PC-3 (cell line): ENCODE measurements at regions of chr1 and their contacts with region 1.

Region 1: DNA sequence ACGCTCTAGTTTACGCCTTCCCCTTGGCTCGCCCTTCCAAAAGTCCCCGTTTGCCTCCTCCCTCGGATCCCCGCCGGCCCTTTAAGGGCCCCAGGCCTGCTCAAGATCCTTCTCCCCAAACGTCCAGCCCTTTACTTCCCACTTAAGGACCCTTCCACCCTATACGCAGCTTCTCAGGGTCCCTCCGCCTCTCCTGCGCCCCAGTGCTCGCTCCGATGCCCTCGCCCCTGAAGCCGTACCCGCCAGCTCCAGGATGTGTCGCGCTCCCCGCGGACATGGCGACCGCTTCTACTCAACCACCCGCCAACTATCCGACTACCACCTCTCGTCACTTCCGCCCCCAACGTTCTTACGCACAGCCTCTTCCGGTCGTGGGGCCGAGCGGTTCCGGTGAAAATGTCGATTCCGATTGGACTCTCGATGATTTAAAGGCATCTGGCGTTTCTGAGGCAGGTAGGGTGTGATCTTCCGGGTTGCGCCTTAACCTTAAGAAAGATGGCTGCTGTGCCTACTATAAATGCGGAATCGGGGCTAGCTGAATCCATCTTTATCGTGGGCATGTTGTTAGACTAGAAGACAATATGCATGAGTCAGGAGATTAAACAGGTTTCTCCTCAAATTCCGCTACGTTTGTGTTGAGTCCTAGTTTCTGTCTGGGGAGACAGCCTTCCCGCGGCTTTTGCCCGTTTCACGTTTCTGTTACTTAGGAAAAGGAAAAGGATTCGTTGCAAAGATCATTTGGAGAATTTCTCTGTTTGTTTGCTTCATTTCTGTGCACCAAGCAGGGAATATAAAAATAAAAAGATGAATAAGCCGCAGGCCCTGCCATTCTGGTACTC is at the start of gene KHDC4:
- DNase-seq: peak; percentile 100
- ATAC-seq: peak; percentile 76
- H3K4me3 ChIP-seq: peak within 1 kb of the TSS; percentile 80
- H3K27ac ChIP-seq: peak within 1 kb of the TSS; percentile 79
- H3K4me1 ChIP-seq: peaks cover 40% of the 10 kb centered on the region
- H3K27me3 ChIP-seq: no peaks in the 10 kb centered on the region
- CTCF ChIP-seq: no peak
- total RNA-seq, gene KHDC4: 63.4 and 64.4 TPM in 2 replicates

Region 2: GRCh38 chr1:155776404-155776803 is 157.9 kb before region 1 on chr1:
- CTCF ChIA-PET with region 1: no interaction called
- POLR2A ChIA-PET with region 1: no interaction called
- intact Hi-C with region 1: no loop called
- DNase-seq: peak; percentile 58
- ATAC-seq: 0 out of 2 replicates have a peak, but pooled peaks have one; percentile 16
- H3K4me3 ChIP-seq: no peak overlapping the region
- H3K27ac ChIP-seq: peak overlapping the region; percentile 25
- H3K4me1 ChIP-seq: peaks cover 23% of the 10 kb centered on the region
- H3K27me3 ChIP-seq: no peaks in the 10 kb centered on the region
- CTCF ChIP-seq: no peak

Region 3: GRCh38 chr1:155859234-155859829 is 75.0 kb before region 1 on chr1 and contains the start of gene SYT11:
- CTCF ChIA-PET with region 1: no interaction called
- POLR2A ChIA-PET with region 1: no interaction called
- intact Hi-C with region 1: loop called (anchors 5 kb)
- DNase-seq: peak; percentile 99
- ATAC-seq: peak; percentile 88
- H3K4me3 ChIP-seq: peak within 1 kb of the TSS; percentile 66
- H3K27ac ChIP-seq: no peak within 1 kb of the TSS
- H3K4me1 ChIP-seq: peaks cover 13% of the 10 kb centered on the region
- H3K27me3 ChIP-seq: peaks cover 27% of the 10 kb centered on the region
- CTCF ChIP-seq: no peak
- total RNA-seq, gene SYT11: 0.29 and 0.44 TPM in 2 replicates

Region 4: DNA sequence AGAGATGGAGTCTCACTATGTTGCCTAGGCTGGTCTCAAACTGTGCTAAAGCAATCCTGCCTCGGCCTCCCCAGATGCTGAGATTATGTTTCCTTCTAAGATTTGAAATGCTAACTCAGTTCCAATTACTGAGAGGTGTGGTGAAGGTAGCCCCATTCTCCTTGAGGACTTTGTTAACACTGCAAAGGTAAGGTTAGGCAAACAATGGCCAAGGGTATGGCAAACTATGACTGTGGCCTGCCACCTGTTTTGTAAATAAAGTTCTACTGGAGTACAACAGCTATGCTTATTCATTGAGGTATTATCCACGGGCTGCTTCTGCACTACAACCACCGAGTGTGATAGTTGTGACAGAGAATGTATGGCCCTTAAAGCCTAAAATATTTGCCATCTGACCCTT is 13.6 kb before region 1 on chr1:
- CTCF ChIA-PET with region 1: interaction called, 4 read pairs
- POLR2A ChIA-PET with region 1: interaction called, 16 read pairs
- intact Hi-C with region 1: no loop called
- DNase-seq: no peak
- ATAC-seq: no peak
- H3K4me3 ChIP-seq: no peak overlapping the region
- H3K27ac ChIP-seq: no peak overlapping the region
- H3K4me1 ChIP-seq: peaks cover 5% of the 10 kb centered on the region; the same call in 1 of the 2 replicates
- H3K27me3 ChIP-seq: no peaks in the 10 kb centered on the region
- CTCF ChIP-seq: no peak

Region 5: GRCh38 chr1:155970531-155971167 is 36.3 kb after region 1 on chr1:
- CTCF ChIA-PET with region 1: no interaction called
- POLR2A ChIA-PET with region 1: no interaction called
- intact Hi-C with region 1: no loop called
- DNase-seq: no peak
- ATAC-seq: peak; percentile 47; the same call in 1 of the 2 replicates
- H3K4me3 ChIP-seq: no peak overlapping the region
- H3K27ac ChIP-seq: no peak overlapping the region
- H3K4me1 ChIP-seq: peaks cover 26% of the 10 kb centered on the region
- H3K27me3 ChIP-seq: no peaks in the 10 kb centered on the region
- CTCF ChIP-seq: no peak

Region 6: DNA sequence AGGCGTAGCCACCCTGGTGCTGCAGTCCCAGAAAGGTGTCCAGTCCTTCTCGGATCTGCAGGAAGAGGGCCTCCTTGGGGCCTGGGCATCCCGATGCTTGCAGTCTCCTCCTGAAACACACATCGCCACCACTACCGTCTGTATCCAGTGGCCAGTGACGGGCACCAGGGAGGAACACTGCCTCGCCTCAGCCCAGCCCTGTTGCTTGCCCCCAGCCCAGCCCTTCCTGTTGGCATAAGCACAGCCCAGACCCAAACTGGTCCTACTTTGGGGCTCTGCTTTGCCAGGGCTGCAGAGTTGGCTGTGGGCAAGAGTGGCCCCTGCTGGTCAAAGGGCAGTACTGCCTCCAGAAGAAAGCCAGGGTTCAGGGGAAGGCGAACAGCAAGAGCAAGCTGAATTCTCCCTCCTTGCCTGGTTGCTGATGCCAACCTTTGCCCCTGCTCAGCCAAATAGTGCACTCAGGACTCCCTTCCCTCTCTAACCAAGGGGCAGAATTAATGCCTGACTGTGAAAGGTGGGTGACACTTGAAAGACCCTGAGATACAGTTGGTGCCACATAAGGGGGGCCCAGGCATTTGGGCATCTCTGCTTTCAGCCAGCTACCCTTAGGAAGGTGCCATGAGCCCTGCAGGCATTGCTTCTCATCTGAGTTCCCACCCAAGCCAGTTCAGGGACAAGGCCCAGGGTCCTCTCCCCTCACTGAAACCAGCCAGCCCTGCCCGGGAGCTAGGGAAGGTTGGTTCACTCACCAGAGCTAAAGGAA is 55.1 kb after region 1 on chr1:
- CTCF ChIA-PET with region 1: interaction called, 13 read pairs
- POLR2A ChIA-PET with region 1: no interaction called
- intact Hi-C with region 1: loop called (anchors 1 kb)
- DNase-seq: peak; percentile 88
- ATAC-seq: peak; percentile 91
- H3K4me3 ChIP-seq: no peak overlapping the region
- H3K27ac ChIP-seq: no peak overlapping the region
- H3K4me1 ChIP-seq: no peaks in the 10 kb centered on the region; the same call in 1 of the 2 replicates
- H3K27me3 ChIP-seq: no peaks in the 10 kb centered on the region
- CTCF ChIP-seq: peak; percentile 98

Region 7: DNA sequence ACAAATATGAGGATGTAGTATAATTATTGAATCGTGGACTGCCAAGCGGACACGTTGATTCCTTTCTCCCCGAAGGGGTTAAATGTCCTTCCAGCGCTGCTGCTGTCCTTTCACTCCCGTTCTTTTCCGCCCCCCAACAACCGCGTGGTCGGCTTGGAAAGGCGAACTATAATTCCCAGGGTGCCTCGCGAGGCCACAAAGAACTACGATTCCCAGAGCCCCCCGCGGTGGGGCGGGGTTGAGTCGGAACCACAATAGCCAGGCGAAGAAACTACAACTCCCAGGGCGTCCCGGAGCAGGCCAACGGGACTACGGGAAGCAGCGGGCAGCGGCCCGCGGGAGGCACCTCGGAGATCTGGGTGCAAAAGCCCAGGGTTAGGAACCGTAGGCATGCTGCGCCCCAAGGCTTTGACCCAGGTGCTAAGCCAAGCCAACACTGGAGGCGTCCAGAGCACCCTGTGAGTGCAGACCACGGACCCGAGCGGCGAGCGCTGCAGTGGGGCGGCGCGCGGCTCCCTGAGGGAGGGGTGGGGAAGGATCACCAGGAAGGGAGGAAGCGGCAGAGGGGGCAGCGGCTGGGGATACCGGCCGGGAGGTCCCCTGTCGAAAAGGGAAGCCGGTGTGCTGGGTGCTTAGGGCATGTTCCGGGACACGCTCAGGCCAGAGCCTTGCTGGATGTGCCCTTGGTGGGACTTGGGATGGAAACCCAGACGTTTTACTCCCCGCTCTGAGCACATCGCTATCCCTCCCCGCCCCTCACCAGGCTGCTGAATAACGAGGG is 120.4 kb after region 1 on chr1 and contains the start of gene LAMTOR2:
- CTCF ChIA-PET with region 1: no interaction called
- POLR2A ChIA-PET with region 1: no interaction called
- intact Hi-C with region 1: loop called (anchors 1 kb)
- DNase-seq: peak; percentile 99
- ATAC-seq: peak; percentile 81
- H3K4me3 ChIP-seq: peak within 1 kb of the TSS; percentile 85
- H3K27ac ChIP-seq: peak within 1 kb of the TSS; percentile 89
- H3K4me1 ChIP-seq: peaks cover 15% of the 10 kb centered on the region
- H3K27me3 ChIP-seq: no peaks in the 10 kb centered on the region
- CTCF ChIP-seq: no peak
- total RNA-seq, gene LAMTOR2: 130 TPM in 2 replicates